Kidney (tissue), 22 donors: ENCODE measurements at regions of chr1 and their contacts with region 1.

Region 1: DNA sequence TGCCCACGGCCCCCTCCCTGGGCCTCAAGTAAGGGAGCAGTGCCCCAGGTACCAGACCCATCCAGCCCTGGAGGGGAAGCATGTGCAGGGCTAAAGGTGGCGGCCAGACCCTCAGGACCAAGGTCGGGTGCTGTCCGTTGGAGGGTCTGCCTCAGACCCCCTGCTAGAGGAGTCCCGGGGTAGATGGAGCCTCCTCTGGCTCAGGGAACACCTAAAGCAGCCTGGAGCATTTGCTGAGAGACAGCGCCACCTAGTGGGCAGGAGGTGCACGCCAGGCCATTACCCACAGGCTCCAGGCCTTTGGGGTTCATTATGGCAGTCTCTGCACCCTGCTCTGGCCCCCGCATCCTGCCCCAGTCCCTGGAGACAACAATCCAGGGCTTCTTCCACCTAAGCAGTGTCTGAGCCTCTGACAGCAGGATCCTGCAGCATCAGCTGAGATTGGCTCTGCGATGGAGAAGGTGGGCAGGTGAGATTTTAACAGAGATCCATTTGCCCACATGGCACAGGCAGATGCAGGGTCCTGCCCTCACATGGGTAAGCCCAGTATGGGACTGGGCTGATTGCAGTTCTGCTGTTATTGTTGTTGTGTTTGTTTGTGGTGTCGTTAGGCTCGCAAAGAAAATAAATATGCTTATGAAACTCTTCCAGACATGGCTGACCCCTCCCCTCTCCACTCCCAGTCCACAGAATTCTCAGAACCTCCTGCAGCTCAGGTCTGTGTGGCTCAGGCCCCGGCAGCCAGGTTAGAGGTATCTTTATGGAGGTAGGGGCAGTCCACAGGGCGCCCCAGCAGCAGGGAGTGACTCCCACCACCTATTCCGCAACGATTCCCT is 42.4 kb downstream of the CTNNBIP1 start:
- DNase-seq: peak; percentile 80 to 90 (median 86)
- H3K4me3 ChIP-seq: no peak overlapping the region
- H3K27ac ChIP-seq: no peak overlapping the region
- H3K4me1 ChIP-seq: peaks cover 0 to 6% (median 0%) of the 10 kb centered on the region in 3 donors
- H3K27me3 ChIP-seq: no peaks in the 10 kb centered on the region
- CTCF ChIP-seq: peak; percentile 98

Region 2: DNA sequence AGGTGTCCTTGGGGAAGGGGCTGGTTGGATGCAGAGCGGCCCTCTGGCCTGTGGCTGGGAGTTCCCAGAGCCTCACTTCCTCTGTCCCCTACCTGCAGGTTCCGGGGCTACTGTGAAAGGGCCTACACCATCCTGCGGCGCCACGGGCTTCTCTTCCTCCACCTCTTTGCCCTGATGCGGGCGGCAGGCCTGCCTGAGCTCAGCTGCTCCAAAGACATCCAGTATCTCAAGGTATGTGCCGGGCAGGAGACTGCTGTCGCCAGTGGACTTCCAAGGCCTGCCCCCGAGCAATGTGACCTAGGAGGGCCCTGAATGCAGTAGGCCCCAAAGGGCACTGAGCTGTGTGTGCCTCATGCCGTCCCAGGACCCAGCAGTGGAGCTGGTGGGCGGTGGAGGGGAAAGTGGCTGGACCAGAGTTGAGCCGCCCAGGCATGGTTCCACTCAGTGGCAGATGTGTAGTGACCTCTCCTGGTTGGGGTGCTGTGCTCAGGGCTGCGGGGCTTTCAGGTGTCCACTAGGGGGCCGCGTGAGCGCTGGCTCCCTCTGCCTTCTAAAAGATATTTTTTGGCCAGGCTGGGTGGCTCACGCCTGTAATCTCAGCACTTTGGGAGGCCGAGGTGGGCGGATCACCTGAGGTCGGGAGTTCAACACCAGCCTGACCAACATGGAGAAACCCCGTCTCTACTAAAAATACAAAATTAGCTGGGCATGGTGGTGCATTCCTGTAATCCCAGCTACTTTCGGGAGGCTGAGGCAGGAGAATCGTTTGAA is 142.7 kb before region 1 on chr1:
- intact Hi-C with region 1: loop called (anchors 10 kb)
- DNase-seq: peak; percentile 17 to 79 (median 39)
- H3K4me3 ChIP-seq: no peak overlapping the region
- H3K27ac ChIP-seq: no peak overlapping the region
- H3K4me1 ChIP-seq: no peaks in the 10 kb centered on the region
- H3K27me3 ChIP-seq: no peaks in the 10 kb centered on the region
- CTCF ChIP-seq: peak; percentile 72

Region 3: DNA sequence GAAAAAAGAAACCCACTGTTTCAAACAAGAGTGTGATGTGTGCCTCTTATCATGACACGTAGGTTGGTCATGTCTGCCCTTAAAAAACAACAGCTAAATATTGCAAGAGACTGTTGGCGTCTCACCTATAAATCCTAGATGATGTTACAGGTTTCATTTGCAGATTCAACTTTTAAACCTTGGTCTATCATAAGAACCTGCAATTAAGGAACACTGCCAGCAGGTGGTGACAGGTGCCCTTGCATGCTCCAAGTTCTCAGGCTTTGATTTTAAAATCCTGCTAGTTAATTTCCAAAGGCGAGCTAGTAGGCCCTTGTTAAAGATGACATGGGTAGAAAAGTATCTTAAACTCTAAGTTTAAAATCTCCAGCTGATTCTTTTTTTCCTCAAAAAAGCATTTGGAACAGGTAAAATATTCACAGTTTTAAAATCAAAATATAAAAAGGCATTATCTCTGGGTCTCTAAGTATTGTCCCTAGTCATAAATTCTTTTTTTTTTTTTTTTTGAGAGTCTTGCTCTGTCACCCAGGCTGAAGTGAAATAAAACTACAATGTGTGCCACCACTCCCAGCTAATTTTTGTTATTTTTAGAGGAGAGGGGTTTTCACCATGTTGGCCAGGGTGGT is 83.0 kb before region 1 on chr1:
- intact Hi-C with region 1: loop called (anchors 10 kb)
- DNase-seq: peak in 3 of 5 donors; percentile 63 to 80 (median 76)
- H3K4me3 ChIP-seq: no peak overlapping the region
- H3K27ac ChIP-seq: no peak overlapping the region
- H3K4me1 ChIP-seq: no peaks in the 10 kb centered on the region
- H3K27me3 ChIP-seq: no peaks in the 10 kb centered on the region
- CTCF ChIP-seq: peak; percentile 93